Gastrocnemius medialis (tissue), 4 donors: ENCODE measurements at regions of chr17 and their contacts with region 1.

Region 1: GRCh38 chr17:78360371-78361224 is 721 bp upstream of the SOCS3 start:
- DNase-seq: peak; percentile 80 to 88
- ATAC-seq: peak; percentile 69 to 78
- H3K4me3 ChIP-seq: peak overlapping the region; percentile 50 to 76 (median 59)
- H3K27ac ChIP-seq: peak overlapping the region; percentile 86 to 94 (median 86)
- H3K4me1 ChIP-seq: peaks cover 23 to 38% of the 10 kb centered on the region in 2 donors
- H3K27me3 ChIP-seq: no peaks in the 10 kb centered on the region
- CTCF ChIP-seq: peak; percentile 93 to 98 (median 97)
- POLR2A ChIP-seq: no peak

Region 2: GRCh38 chr17:78289802-78290363 is 70.7 kb before region 1 on chr17:
- in situ Hi-C with region 1: no loop called
- intact Hi-C with region 1: loop called (anchors 1 kb)
- DNase-seq: peak; percentile 61 to 72
- ATAC-seq: peak; percentile 86 to 93
- H3K4me3 ChIP-seq: no peak overlapping the region
- H3K27ac ChIP-seq: no peak overlapping the region
- H3K4me1 ChIP-seq: peaks cover 4 to 13% of the 10 kb centered on the region in 2 donors
- H3K27me3 ChIP-seq: no peaks in the 10 kb centered on the region
- CTCF ChIP-seq: peak; percentile 71 to 84 (median 77)
- POLR2A ChIP-seq: no peak

Region 3: DNA sequence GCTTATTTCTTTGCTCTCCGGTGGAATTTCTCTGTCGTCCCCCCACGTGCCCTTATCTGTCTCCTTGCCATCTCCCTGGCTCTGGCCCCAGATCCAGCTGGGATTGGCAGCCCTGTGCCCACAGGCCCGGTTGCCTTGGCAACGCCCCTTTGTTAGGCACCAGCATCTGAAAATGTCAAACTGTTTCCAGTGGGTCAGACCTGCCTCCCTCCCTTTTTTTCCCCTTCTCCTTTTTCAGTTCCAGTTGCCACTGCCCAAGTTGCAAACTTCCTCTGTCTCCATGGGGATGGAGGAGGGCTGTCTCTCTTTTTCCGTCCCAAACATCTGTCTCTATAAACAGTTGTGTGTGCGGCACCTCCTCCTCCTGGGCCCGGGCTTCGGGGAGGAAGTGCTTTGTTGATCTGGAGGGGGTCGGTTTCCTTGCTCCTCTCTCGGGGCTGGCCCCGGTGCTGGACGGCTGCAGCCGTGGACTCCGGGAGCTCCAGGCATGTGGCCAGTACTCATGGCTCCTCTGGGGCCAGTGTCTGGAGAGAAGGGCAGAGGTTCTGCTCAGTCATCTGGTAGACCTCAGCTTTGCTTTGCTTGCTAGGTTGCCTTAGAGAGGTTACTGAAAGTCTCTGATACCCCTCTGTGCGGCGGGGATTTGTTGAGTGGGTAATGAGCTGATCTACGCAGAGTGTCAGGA is 36.1 kb before region 1 on chr17:
- in situ Hi-C with region 1: no loop called
- intact Hi-C with region 1: loop called (anchors 2 kb)
- DNase-seq: peak; percentile 66 to 77
- ATAC-seq: peak; percentile 55 to 69
- H3K4me3 ChIP-seq: peak overlapping the region in 3 of 4 donors; percentile 15 to 36 (median 31)
- H3K27ac ChIP-seq: peak overlapping the region; percentile 68 to 83 (median 74)
- H3K4me1 ChIP-seq: peaks cover 26 to 39% of the 10 kb centered on the region in 2 donors
- H3K27me3 ChIP-seq: no peaks in the 10 kb centered on the region
- CTCF ChIP-seq: no peak
- POLR2A ChIP-seq: peak in 1 of 2 donors; percentile 16